ENCODE measurements at regions of chr10 and their contacts with region 1.

Region 1: GRCh38 chr10:69644658-69645295 is 14.7 kb downstream of the FAM241B start:
- DNase-seq: peak; percentile 91
- H3K4me3 ChIP-seq: no peak overlapping the region; a peak in 1 of 4 replicates
- H3K27ac ChIP-seq: no peak overlapping the region
- H3K4me1 ChIP-seq: peaks cover 0 to 12% of the 10 kb centered on the region in 2 experiments; a peak in 1 of 4 replicates
- H3K27me3 ChIP-seq: 0 out of 2 replicates have a peak, but pooled peaks cover 4% of the 10 kb centered on the region
- CTCF ChIP-seq: peak; percentile 89
- EP300 ChIP-seq: no peak
- RAD21 ChIP-seq: peak; percentile 97

Region 2: DNA sequence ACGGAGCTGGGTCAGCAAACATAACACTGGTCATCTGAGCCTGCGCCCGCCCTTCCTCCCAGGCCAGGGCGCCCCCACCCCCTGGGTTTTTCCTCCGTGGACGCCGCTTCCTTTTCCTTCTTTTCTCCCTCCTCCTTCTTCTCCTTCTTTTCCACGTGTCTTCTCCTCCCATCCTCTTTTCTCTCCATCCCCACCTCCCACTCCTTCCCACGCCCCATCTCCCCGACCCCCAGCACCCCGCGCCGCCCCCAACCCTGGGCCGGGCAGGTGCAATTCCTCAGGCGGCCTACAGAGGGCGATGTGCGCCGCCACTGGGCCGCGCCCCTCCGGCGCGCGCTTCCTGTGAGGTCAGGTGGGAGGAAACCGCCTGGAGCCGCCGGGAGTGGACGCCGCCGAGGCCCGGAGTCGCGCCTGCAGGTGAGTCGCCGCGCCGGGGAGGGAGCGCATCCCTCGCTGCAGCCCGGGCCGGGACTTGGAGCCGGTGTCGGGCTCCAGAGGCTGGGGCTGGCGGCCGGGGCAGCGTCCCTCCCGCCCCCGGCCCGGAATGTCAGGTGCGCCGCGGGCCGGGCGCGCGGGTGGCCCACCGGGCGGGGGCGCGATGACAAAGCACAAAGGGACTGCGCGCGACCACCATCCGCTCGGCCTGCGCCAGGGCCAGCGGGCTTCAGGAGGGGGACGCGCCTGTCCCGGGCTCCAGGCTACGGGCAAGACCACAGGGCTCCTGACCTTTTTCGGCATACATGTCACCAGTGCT is 14.7 kb before region 1 on chr10 and contains the start of gene FAM241B:
- CTCF ChIA-PET with region 1: interaction called, 14 read pairs
- POLR2A ChIA-PET with region 1: no interaction called
- DNase-seq: peak; percentile 97
- H3K4me3 ChIP-seq: peak within 1 kb of the TSS; percentile 76 to 82
- H3K27ac ChIP-seq: peak within 1 kb of the TSS in 1 of 2 experiments; percentile 6; a peak in 1 of 4 replicates
- H3K4me1 ChIP-seq: peaks cover 6 to 17% of the 10 kb centered on the region in 2 experiments; a peak in 2 of 4 replicates
- H3K27me3 ChIP-seq: no peaks in the 10 kb centered on the region; the same call in 1 of the 2 replicates
- CTCF ChIP-seq: peak; percentile 95
- EP300 ChIP-seq: no peak
- RAD21 ChIP-seq: peak; percentile 43
- polyA plus RNA-seq, gene FAM241B: 16.0 and 19.2 TPM in 2 replicates

Region 3: GRCh38 chr10:69684020-69684980 is 39.5 kb after region 1 on chr10:
- CTCF ChIA-PET with region 1: interaction called, 70 read pairs
- POLR2A ChIA-PET with region 1: interaction called, 4 read pairs
- DNase-seq: peak; percentile 39
- H3K4me3 ChIP-seq: no peak overlapping the region
- H3K27ac ChIP-seq: no peak overlapping the region; a peak in 1 of 4 replicates
- H3K4me1 ChIP-seq: peaks cover 0 to 62% of the 10 kb centered on the region in 2 experiments; a peak in 2 of 4 replicates
- H3K27me3 ChIP-seq: peaks cover 31% of the 10 kb centered on the region; the same call in 1 of the 2 replicates
- CTCF ChIP-seq: no peak
- EP300 ChIP-seq: no peak
- RAD21 ChIP-seq: no peak

Region 4: DNA sequence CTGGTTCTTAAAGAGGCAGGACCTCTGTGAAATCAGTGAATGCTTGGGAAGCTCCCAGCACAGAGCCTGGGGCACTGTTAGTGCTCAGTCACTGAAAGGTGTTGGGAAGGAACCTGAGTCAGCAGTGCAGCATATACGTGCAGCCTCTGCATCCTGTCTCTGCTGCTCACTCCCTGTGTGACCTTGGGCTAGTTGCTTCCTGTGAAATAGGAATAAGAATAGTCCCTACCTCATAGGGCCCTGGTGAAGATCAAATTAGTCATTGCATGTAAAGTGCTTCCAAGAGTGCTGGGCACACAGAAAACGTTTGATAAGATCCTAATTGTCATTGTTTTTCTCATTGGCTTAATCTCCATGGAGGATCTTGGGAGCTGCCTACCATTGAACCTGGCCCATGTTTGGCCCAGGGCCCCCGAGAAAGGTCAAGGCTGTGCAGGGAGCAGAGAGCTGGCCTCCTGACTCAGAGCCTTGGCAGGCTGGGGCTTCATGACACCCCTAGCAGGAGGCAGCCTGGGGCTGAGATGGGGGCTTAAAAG is 83.6 kb after region 1 on chr10:
- CTCF ChIA-PET with region 1: interaction called, 571 read pairs
- POLR2A ChIA-PET with region 1: no interaction called
- DNase-seq: peak; percentile 66
- H3K4me3 ChIP-seq: no peak overlapping the region
- H3K27ac ChIP-seq: peak overlapping the region; percentile 39 to 51; a peak in 3 of 4 replicates
- H3K4me1 ChIP-seq: peaks cover 12 to 39% of the 10 kb centered on the region in 2 experiments; a peak in 3 of 4 replicates
- H3K27me3 ChIP-seq: no peaks in the 10 kb centered on the region
- CTCF ChIP-seq: no peak
- EP300 ChIP-seq: no peak
- RAD21 ChIP-seq: no peak

Region 5: GRCh38 chr10:69742928-69743602 is 98.3 kb after region 1 on chr10:
- CTCF ChIA-PET with region 1: interaction called, 18 read pairs
- POLR2A ChIA-PET with region 1: no interaction called
- DNase-seq: peak; percentile 64
- H3K4me3 ChIP-seq: no peak overlapping the region
- H3K27ac ChIP-seq: no peak overlapping the region
- H3K4me1 ChIP-seq: peaks cover 0 to 4% of the 10 kb centered on the region in 2 experiments; a peak in 1 of 4 replicates
- H3K27me3 ChIP-seq: peaks cover 7% of the 10 kb centered on the region; the same call in 1 of the 2 replicates
- CTCF ChIP-seq: peak; percentile 64
- EP300 ChIP-seq: no peak
- RAD21 ChIP-seq: peak; percentile 69